CD4-positive, alpha-beta T cell (primary cell): ENCODE measurements at regions of chr20 and their contacts with region 1.

Region 1: DNA sequence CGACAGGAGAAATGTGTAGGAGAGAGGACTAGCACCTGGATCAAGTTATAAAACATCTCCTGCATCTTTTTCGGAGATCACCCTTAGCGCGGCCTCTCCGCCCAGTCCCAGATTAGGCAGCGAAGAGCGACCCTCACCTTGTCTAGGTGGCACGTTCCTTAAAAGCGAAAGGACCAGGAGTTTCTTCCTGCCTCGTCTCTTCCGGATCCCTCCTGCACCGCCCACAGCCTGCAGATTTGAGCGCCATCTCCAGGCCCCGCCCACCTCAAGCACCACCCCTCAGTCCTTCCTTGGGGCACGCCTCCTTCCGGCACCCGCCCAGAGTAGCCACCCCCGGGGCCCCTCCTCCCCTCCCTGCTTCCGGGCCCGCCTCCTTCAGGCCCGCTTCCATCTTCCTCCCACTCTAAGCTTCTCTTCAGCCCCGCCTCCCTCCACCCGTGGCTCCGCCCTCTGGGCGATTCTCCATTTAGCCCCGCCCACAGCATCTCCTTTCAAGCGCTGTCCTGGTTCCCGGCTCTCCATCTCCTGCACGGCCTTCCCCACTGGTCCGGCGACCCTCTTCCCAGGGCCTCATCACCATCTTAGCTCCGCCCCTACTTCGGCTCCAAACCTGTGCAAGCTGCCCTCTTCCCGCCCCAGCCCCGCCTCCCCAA is 662 bp upstream of the RALY start:
- DNase-seq: peak; percentile 99 to 100 (median 99)
- ATAC-seq: peak; percentile 82
- H3K4me3 ChIP-seq: peak overlapping the region; percentile 97
- H3K4me3 Mint-ChIP-seq: peak overlapping the region; percentile 100
- H3K27ac ChIP-seq: peak overlapping the region; percentile 91 to 92
- H3K27ac Mint-ChIP-seq: peak overlapping the region; percentile 99
- H3K4me1 ChIP-seq: peaks cover 51% of the 10 kb centered on the region
- H3K4me1 Mint-ChIP-seq: peaks cover 68% of the 10 kb centered on the region
- H3K27me3 ChIP-seq: no peaks in the 10 kb centered on the region
- H3K27me3 Mint-ChIP-seq: no peaks in the 10 kb centered on the region
- CTCF ChIP-seq: no peak

Region 2: DNA sequence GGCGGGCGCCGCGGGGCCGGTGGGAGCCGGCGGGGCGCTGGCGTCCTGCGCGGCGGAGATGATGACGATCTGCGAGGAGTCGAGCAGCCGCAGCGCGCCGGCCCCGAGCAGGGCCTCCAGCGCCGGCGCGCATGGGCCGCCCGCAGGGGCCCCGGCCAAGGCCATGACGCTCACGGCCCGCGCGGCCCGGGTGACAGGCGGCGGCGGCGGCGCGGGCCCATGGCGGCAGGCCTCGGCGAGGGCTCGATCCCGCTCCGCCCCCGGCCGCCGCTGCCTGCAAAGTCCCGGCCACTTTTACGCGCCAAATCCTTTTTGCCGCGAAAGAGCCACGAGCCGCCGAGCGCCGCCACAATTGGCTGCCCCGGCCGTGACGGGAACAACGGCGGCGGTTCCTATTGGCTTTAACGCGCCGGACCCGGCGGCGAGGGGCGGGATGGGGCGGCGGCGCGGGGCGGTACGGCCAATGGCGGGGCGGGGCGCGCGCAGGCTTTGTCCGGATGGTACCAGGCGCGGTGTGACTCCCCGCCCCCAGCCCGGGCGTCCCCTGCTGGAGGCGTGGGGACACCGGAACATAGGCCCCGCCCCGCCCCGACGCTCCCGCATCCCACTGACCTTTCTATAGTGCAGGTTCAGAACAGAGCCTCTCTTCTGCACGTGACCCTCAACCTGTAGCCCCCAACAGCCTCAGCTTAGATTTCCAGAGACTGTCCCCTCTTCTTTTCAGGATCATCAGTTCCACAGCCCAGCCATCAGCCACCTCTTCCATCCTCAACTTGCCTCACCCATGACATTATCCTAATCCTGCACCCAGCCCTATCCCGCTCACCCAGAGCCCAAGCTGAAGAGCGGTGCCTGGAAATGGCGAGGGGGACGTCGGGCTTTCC is 306.7 kb before region 1 on chr20 and contains the start of gene E2F1:
- CTCF ChIA-PET with region 1: no interaction called
- POLR2A ChIA-PET with region 1: no interaction called
- intact Hi-C with region 1: loop called in 1 of 2 experiments (anchors 10 kb)
- DNase-seq: peak; percentile 81 to 97 (median 94)
- ATAC-seq: peak; percentile 94
- H3K4me3 ChIP-seq: peak within 1 kb of the TSS; percentile 47
- H3K4me3 Mint-ChIP-seq: peak within 1 kb of the TSS; percentile 89
- H3K27ac ChIP-seq: no peak within 1 kb of the TSS
- H3K27ac Mint-ChIP-seq: peak within 1 kb of the TSS; percentile 39
- H3K4me1 ChIP-seq: peaks cover 50% of the 10 kb centered on the region
- H3K4me1 Mint-ChIP-seq: peaks cover 50% of the 10 kb centered on the region
- H3K27me3 ChIP-seq: no peaks in the 10 kb centered on the region
- H3K27me3 Mint-ChIP-seq: no peaks in the 10 kb centered on the region
- CTCF ChIP-seq: peak; percentile 23
- total RNA-seq, gene E2F1: 1.2 to 1.6 TPM

Region 3: GRCh38 chr20:33810885-33811777 is 181.9 kb before region 1 on chr20 and contains the start of gene CHMP4B:
- CTCF ChIA-PET with region 1: no interaction called
- POLR2A ChIA-PET with region 1: interaction called, 38 read pairs
- intact Hi-C with region 1: loop called (anchors 1 kb)
- DNase-seq: peak; percentile 97 to 99 (median 98)
- ATAC-seq: peak; percentile 95
- H3K4me3 ChIP-seq: peak within 1 kb of the TSS; percentile 83
- H3K4me3 Mint-ChIP-seq: peak within 1 kb of the TSS; percentile 100
- H3K27ac ChIP-seq: peak within 1 kb of the TSS; percentile 38 to 66
- H3K27ac Mint-ChIP-seq: peak within 1 kb of the TSS; percentile 93
- H3K4me1 ChIP-seq: peaks cover 45% of the 10 kb centered on the region
- H3K4me1 Mint-ChIP-seq: peaks cover 49% of the 10 kb centered on the region
- H3K27me3 ChIP-seq: no peaks in the 10 kb centered on the region
- H3K27me3 Mint-ChIP-seq: no peaks in the 10 kb centered on the region
- CTCF ChIP-seq: no peak
- total RNA-seq, gene CHMP4B: 44.2 to 49.3 TPM

Region 4: DNA sequence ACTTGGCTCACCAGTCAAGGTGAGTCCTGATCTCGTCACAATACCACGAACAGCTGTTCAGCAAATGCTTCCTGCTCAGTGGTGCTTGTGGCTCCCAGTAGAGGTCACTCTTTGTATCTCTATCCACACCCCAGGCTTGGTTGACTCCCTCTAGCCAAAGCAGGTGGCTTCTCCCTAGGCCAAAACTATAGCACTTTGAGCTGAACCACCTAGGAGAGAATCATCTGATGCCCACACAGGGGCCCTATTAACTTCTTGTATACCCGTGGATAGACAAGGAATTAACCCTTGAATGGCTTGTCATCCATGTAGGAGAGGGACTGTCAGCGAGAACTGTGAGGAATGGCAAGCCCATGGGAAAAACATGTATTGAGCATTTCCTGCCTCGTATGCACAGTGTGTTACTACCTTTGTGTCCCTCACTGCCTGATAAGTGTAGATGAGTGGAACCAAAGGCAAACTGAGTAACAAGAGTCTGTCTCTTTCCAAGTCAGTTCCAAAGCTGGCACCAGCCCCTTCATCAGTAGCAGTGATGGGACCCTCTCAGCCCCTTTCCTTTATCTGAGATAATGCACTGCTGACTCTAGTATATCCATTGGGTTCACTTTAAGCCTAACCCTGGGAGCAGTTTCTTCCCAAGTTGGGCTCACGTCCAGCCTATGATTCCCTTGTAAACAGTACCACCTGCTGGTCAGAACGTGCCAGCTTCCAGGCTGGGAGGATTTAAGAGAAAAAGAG is 76.5 kb after region 1 on chr20:
- CTCF ChIA-PET with region 1: no interaction called
- POLR2A ChIA-PET with region 1: interaction called, 12 read pairs
- intact Hi-C with region 1: loop called in 1 of 2 experiments (anchors 2 kb)
- DNase-seq: peak; percentile 33 to 79 (median 46)
- ATAC-seq: peak; percentile 90
- H3K4me3 ChIP-seq: no peak overlapping the region
- H3K4me3 Mint-ChIP-seq: no peak overlapping the region
- H3K27ac ChIP-seq: no peak overlapping the region
- H3K27ac Mint-ChIP-seq: peak overlapping the region; percentile 39
- H3K4me1 ChIP-seq: peaks cover 12% of the 10 kb centered on the region
- H3K4me1 Mint-ChIP-seq: peaks cover 52% of the 10 kb centered on the region
- H3K27me3 ChIP-seq: no peaks in the 10 kb centered on the region
- H3K27me3 Mint-ChIP-seq: no peaks in the 10 kb centered on the region
- CTCF ChIP-seq: peak; percentile 78

Region 5: DNA sequence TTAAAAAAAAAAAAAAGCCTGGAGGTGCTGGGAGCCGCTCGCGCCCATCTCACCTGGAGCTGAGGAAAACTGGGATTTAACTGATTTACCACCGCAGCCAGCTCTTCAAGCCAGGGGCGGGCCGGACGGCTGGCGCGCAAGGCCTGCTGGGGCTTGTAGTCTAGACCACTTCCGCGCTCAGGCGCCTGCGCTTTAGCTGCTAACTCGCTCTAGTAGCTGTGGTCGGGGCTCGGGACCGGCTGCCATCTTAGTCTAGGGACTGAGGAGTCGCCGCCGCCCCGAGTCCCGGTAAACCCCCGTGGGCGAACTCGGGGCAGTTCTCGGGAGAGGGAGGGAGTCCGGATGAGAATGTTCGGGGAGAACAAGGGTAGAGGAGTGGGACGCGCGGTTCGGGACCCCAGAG is 370.0 kb after region 1 on chr20 and contains the start of gene ITCH:
- CTCF ChIA-PET with region 1: no interaction called
- POLR2A ChIA-PET with region 1: interaction called, 7 read pairs
- intact Hi-C with region 1: loop called in 1 of 2 experiments (anchors 5 kb)
- DNase-seq: peak; percentile 86 to 96 (median 89)
- ATAC-seq: peak; percentile 100
- H3K4me3 ChIP-seq: peak within 1 kb of the TSS; percentile 98
- H3K4me3 Mint-ChIP-seq: peak within 1 kb of the TSS; percentile 100
- H3K27ac ChIP-seq: peak within 1 kb of the TSS; percentile 72 to 78
- H3K27ac Mint-ChIP-seq: peak within 1 kb of the TSS; percentile 95
- H3K4me1 ChIP-seq: peaks cover 47% of the 10 kb centered on the region
- H3K4me1 Mint-ChIP-seq: peaks cover 37% of the 10 kb centered on the region
- H3K27me3 ChIP-seq: no peaks in the 10 kb centered on the region
- H3K27me3 Mint-ChIP-seq: no peaks in the 10 kb centered on the region
- CTCF ChIP-seq: no peak
- total RNA-seq, gene ITCH: 44.2 to 47.0 TPM

Region 6: DNA sequence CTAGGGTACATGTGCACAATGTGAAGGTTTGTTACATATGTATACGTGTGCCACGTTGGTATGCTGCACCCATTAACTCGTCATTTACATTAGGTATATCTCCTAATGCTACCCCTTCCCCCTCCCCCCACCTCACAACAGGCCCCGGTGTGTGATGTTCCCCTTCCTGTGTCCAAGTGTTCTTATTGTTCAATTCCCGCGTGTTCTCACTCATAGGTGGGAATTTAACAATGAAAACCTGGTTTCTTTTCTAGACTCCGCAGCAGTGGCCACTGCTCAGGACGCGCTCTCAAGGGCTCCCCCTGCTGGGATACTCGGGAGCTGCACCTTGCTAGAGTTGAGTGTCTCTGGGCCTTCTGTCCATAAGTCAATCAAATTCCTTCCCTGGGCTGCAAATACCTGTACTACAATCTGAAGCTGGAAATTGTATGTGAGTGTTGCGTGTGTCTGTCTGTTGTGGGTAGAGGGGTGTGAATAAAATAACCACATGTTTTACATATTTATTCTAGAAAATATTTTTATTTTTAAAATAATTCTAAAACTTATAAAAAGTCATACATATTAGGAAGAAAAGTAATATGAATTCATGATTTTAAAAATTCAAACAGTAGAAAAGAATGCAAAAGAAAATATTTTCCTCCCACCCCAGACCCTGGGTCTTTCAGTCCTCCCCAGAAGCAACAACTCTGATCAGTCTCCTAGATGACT is 1454.2 kb after region 1 on chr20:
- CTCF ChIA-PET with region 1: no interaction called
- POLR2A ChIA-PET with region 1: no interaction called
- intact Hi-C with region 1: loop called in 1 of 2 experiments (anchors 5 kb)
- DNase-seq: peak; percentile 79 to 94 (median 89)
- ATAC-seq: peak; percentile 99
- H3K4me3 ChIP-seq: peak overlapping the region; percentile 40
- H3K4me3 Mint-ChIP-seq: peak overlapping the region; percentile 87
- H3K27ac ChIP-seq: no peak overlapping the region
- H3K27ac Mint-ChIP-seq: no peak overlapping the region
- H3K4me1 ChIP-seq: peaks cover 5% of the 10 kb centered on the region
- H3K4me1 Mint-ChIP-seq: peaks cover 4% of the 10 kb centered on the region
- H3K27me3 ChIP-seq: peaks cover 0 to 1% of the 10 kb centered on the region in 2 experiments
- H3K27me3 Mint-ChIP-seq: peaks cover 6% of the 10 kb centered on the region
- CTCF ChIP-seq: peak; percentile 92